Panc1 (cell line): ENCODE measurements at regions of chr9 and their contacts with region 1.

Region 1: DNA sequence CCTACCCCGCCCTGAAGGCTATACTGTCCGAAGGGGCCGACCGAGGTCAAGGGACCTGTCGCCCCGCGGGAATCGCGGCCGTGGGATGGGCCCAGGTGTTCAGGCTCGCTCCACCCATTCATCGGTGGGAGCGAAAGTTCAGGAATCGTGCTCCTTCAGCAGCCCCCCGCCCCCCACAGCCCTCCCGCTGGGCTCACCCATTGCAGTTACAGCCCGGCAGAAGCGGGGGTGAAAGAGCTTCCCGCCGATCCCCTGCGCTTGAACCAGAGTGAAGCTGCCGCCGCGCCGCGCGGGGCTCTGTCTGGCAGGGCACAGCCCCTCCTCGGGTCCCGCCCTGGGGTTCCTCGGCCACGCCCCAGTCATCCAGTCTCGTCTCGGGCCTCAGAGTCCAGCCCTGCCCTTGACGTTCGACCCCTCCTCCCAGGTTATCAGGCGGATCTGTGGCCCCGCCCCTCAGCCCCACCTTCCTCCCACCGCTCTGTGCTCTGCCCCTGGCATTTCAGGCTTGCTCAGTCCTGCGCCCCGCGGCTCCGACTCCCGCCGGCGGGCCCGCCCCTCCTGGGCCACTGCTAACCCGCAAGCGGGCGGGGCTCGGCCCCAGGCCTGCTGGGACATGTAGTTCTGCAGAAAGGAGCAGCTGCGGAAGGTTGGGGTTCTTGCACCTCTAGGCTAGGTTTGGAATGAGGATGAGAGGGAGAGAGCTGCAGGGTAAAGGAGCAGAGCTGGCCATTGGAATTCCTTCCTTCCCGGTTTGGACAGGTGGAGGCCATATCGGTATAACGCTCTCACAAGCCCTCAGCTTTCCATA is at the start of gene MYORG:
- DNase-seq: peak; percentile 84
- ATAC-seq: peak; percentile 89
- H3K4me3 ChIP-seq: peak within 1 kb of the TSS; percentile 82 to 88
- H3K27ac ChIP-seq: peak within 1 kb of the TSS; percentile 58
- H3K4me1 ChIP-seq: peaks cover 21% of the 10 kb centered on the region
- H3K27me3 ChIP-seq: no peaks in the 10 kb centered on the region
- CTCF ChIP-seq: no peak
- total RNA-seq, gene MYORG: 9.7 TPM

Region 2: GRCh38 chr9:34252670-34253459 is 123.9 kb before region 1 on chr9:
- CTCF ChIA-PET with region 1: interaction called, 3 read pairs
- POLR2A ChIA-PET with region 1: no interaction called
- in situ Hi-C with region 1: no loop called
- intact Hi-C with region 1: loop called (anchors 5 kb)
- DNase-seq: peak; percentile 46
- ATAC-seq: peak; percentile 73
- H3K4me3 ChIP-seq: no peak overlapping the region
- H3K27ac ChIP-seq: no peak overlapping the region
- H3K4me1 ChIP-seq: peaks cover 21% of the 10 kb centered on the region
- H3K27me3 ChIP-seq: no peaks in the 10 kb centered on the region
- CTCF ChIP-seq: no peak

Region 3: DNA sequence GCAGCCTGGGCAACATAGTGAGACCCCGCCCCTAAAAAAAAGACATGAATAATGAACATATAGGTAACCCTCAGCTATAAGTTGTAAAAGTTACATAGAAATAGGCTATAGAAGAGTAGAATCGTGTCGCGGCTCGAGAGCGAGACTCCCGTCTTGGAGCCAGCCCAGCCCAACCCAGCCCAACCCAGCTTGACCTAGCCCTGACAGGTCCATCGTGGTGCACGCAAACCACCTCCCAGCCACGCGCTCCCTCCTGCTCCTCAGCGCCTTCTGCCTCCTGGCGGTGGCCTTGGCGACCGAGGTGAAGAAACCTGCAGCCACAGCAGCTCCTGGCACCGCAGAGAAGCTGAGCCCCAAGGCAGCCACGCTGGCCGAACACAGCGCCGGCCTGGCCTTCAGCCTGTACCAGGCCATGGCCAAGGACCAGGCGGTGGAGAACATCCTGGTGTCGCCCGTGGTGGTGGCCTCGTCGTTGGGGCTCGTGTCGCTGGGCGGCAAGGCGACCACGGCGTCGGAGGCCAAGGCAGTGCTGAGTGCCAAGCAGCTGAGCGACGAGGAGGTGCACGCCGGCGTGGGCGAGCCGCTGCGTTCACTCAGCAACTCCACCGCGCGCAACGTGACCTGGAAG is 58.5 kb before region 1 on chr9:
- CTCF ChIA-PET with region 1: interaction called, 10 read pairs
- POLR2A ChIA-PET with region 1: no interaction called
- in situ Hi-C with region 1: no loop called
- intact Hi-C with region 1: no loop called
- DNase-seq: no peak
- ATAC-seq: 0 out of 2 replicates have a peak, but pooled peaks have one; percentile 12
- H3K4me3 ChIP-seq: no peak overlapping the region
- H3K27ac ChIP-seq: no peak overlapping the region
- H3K4me1 ChIP-seq: no peaks in the 10 kb centered on the region
- H3K27me3 ChIP-seq: no peaks in the 10 kb centered on the region
- CTCF ChIP-seq: no peak

Region 4: DNA sequence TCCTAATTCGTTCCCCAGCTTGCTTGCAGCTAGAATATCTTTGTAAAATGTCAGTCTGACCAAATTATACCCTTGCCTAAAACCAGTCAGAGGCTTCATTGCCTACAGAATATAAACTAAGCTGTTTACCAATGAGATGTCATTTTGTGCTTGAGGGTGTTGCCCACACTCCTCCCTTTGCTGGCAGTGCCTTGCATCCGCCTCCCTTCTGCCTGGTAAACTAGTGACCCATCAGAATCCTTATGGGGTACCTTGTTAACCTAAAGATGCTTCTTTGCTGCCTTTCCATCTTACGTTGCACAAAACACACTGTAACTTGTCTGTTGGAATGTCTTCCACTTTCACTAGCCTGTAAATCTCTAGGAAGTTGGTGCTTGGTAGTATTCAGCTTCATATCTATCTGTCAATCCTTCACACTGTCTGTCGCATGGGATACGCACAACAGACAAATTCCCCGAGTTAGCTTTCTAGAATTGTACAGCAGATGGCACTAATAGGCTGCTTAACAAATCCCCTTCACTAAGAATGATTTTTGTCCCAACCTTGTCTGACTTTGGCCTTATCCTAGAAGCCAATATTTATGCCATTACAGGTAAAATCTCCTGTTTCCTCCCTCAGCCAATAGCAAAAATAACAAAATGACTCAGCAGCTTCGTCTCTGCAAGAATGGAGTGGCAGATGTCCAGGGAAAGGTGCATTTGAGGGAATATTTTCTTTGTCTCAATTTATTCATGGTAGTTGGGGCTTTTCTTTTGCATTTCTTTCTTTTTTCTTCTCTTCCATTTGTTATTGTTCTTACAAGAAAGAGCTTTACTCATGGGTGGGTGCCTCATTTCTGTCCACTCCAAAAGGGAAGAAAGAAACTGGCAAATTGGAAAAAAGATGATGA is 44.5 kb before region 1 on chr9:
- CTCF ChIA-PET with region 1: interaction called, 9 read pairs
- POLR2A ChIA-PET with region 1: interaction called, 6 read pairs
- in situ Hi-C with region 1: no loop called
- intact Hi-C with region 1: loop called (anchors 1 kb)
- DNase-seq: peak; percentile 30
- ATAC-seq: no peak
- H3K4me3 ChIP-seq: no peak overlapping the region
- H3K27ac ChIP-seq: no peak overlapping the region
- H3K4me1 ChIP-seq: peaks cover 24% of the 10 kb centered on the region
- H3K27me3 ChIP-seq: no peaks in the 10 kb centered on the region
- CTCF ChIP-seq: peak; percentile 75

Region 5: DNA sequence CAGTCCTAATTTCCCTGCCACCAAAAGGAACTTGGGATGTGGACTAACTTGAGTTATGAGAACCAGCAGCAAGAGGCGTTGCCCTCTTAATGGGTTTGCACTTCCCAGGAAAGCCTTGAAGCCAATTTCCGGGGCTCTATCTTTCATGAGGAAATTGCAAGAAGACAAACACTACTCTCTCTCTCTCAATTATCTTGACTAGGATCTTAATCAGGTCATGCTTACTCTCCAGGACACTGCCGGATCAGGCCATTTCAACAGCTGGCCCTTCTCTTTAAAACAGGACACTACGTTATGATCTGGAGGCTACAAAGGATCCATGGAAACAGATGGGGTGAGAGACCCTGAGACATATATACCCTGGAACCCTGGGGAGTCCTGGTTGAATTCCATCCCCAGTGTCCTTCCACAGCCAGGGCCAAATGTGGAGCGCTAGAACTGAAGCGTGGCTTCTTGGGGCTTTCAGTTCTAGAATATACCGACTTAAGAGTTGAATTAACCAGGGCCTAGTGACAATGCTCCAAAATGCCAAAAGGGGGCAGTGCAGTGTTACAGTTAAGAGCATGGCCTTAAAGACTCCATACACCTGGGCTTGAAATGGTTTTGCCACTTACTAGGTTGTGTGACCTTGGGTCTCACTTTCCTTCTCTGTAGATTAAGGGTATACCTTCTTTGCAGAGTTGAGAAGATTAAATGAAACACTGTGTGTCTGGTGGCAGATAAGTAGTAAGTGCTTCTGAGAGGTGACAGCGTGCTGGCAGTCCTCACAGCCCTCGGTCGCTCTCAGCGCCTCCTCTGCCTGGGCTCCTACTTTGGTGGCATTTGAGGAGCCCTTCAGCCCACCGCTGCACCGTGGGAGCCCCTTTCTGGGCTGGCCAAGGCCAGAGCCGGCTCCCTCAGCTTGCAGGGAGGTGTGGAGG is 60.5 kb after region 1 on chr9:
- CTCF ChIA-PET with region 1: no interaction called
- POLR2A ChIA-PET with region 1: no interaction called
- in situ Hi-C with region 1: no loop called
- intact Hi-C with region 1: no loop called
- DNase-seq: peak; percentile 39
- ATAC-seq: peak; percentile 97
- H3K4me3 ChIP-seq: no peak overlapping the region
- H3K27ac ChIP-seq: no peak overlapping the region
- H3K4me1 ChIP-seq: no peaks in the 10 kb centered on the region
- H3K27me3 ChIP-seq: no peaks in the 10 kb centered on the region
- CTCF ChIP-seq: peak; percentile 90

Region 6: DNA sequence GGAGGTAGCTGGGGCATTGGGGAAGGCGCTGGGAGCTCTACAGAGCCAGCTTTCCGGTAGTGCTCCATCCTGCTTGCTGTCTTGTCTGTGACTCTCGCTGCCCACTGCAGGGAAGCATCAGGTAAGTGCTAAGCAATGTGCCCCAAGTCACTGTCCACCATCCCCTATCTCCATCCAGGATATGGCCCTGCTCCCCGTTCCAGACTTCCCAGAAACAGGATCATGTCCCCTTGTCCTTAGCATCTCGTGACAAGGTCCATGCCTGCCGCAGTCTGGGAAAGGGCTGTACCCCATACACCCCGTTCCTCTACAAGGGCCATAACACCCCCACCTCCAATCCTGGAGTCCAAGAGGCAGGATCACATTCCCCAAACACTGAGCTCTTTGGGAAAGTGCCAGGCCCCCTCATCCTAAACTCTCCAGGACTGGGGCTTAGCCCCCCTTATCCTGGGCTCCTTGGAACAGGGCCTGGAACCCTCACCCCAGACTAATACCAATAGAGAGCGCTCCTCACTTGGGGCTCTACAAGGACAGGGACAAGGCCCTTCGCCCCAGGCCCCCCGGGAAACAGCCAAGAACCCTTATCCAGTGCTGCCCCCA is 234.5 kb after region 1 on chr9:
- CTCF ChIA-PET with region 1: no interaction called
- POLR2A ChIA-PET with region 1: no interaction called
- in situ Hi-C with region 1: no loop called
- intact Hi-C with region 1: no loop called
- DNase-seq: no peak
- ATAC-seq: peak; percentile 15
- H3K4me3 ChIP-seq: peak overlapping the region; percentile 68 to 80
- H3K27ac ChIP-seq: peak overlapping the region; percentile 96
- H3K4me1 ChIP-seq: peaks cover 16% of the 10 kb centered on the region
- H3K27me3 ChIP-seq: no peaks in the 10 kb centered on the region
- CTCF ChIP-seq: no peak